ENCODE measurements at regions of chr12 and their contacts with region 1.

Region 1: GRCh38 chr12:49098035-49098451 is 3.4 kb upstream of the DHH start:
- DNase-seq: no peak

Region 2: DNA sequence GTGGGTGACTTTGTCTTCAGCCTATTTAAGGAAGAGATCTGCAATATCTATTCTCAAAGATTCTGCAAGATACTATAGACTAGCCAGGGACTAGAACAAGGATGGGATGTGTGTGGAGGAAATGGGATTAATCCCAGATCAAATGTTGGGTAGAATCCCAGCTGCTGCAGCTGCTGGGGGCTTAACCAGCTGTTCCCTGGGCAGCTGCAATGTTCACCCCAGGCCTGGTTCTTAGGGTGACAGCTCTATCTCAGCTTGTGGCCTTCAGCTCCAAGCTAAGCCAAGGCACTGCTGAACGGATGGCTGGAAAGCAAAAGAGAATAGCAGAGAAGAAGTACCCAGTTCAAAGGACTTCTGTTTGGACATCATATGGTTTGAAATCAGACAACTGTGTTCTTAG is 18.2 kb before region 1 on chr12:
- intact Hi-C with region 1: loop called in 1 of 2 experiments (anchors 1 kb)
- DNase-seq: peak; percentile 20

Region 3: DNA sequence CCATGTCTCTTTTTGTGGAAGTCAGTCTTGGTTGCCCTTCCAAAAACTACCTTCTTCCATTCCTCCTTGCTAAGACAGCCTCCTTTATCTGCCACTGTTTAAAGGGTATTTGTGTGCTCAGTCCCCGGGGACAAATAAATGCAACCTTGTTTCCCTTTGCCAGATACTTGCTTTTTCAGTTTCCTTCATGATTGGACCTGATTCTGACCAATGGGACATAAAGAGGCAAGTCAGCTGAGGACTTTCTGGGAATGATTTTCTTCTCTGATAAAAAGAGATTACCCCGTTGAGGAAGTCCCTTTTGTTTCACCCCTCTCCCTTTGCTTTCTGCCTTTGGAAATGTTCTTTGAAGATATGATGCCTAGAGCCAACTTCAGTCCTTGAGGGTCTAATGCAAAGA is 40.5 kb after region 1 on chr12:
- intact Hi-C with region 1: no loop called
- DNase-seq: no peak

Measured in posterior vena cava (tissue), 2 donors.